Activated CD8-positive, alpha-beta T cell treated with anti-CD3 and anti-CD28 coated beads for 36 hours (primary cell): ENCODE measurements at regions of chr20 and their contacts with region 1.

Region 1: DNA sequence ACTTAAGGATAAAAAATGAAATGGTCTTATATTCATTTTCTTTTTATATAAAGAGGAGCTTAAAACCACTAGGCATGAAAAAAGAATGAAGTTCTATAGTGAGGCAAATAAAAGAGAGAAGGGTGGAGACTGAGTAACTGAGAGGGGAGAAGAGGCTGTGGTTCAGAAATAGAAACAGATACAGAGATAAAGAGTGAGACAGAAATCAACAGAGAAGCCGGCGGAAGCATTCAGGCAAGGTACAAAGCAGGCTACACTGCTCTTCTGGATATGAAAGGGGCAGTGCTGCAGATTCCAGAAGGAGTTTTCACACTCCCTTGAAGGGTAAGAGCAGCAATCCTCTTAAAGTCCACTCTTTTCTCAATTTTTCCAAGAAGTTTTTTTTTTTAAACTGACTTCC is 29.9 kb downstream of the NFATC2 start:
- DNase-seq: no peak
- ATAC-seq: peak; percentile 84
- H3K4me3 Mint-ChIP-seq: no peak overlapping the region
- H3K27ac Mint-ChIP-seq: peak overlapping the region; percentile 84
- H3K4me1 Mint-ChIP-seq: peaks cover 73% of the 10 kb centered on the region
- H3K27me3 Mint-ChIP-seq: no peaks in the 10 kb centered on the region
- CTCF ChIP-seq: no peak

Region 2: DNA sequence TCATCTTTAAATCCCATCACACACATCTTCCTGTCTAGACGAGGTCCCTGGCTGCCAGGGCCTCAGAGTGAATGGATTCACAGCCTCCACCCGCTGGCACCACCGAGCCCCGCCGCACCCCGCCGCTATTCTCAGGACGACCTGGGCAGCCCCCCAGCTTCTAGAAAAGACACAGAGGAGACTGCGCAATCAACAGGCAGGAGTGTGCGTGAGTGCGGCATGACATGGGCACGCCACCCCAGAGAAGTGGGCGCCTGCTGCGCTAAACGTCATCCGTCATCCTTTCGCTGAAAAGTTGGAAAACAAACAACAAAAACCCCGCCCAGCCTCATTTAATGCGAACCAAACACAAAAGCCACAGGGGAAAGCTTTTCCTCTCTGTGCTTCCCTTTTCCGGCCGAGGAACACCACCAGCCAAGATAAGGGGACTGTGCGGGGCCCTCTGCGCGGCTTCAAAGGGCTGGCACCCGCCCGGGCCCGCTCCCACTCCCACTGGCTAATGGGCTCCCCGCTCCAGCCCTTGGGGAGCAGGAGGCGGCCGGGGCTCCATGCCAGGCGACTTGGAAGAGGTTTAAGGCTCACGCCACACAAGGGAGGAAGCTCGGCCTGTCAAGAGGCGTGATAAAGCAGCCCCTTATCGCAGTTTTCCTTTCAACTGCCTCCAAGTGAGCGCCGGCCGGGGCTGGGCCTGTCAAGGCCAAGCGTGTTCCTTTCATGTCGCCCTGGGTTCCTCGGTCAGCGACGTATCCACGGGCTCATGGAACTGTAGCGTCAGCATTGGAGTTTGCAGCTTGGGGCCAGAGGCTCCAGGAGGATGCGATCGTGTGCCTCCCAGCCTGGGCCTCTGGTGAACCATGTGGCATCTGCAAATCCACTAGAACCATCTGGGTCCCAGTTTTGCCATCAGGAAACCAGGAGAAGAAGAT is 20.2 kb before region 1 on chr20:
- CTCF ChIA-PET with region 1: interaction called, 3 read pairs
- POLR2A ChIA-PET with region 1: interaction called, 10 read pairs
- intact Hi-C with region 1: no loop called
- DNase-seq: no peak
- ATAC-seq: no peak
- H3K4me3 Mint-ChIP-seq: no peak overlapping the region
- H3K27ac Mint-ChIP-seq: peak overlapping the region; percentile 92
- H3K4me1 Mint-ChIP-seq: peaks cover 93% of the 10 kb centered on the region
- H3K27me3 Mint-ChIP-seq: no peaks in the 10 kb centered on the region
- CTCF ChIP-seq: no peak

Region 3: GRCh38 chr20:51500311-51500710 is 12.3 kb before region 1 on chr20:
- CTCF ChIA-PET with region 1: interaction called, 8 read pairs
- POLR2A ChIA-PET with region 1: interaction called, 25 read pairs
- intact Hi-C with region 1: no loop called
- DNase-seq: peak; percentile 79
- ATAC-seq: peak; percentile 82
- H3K4me3 Mint-ChIP-seq: no peak overlapping the region
- H3K27ac Mint-ChIP-seq: peak overlapping the region; percentile 92
- H3K4me1 Mint-ChIP-seq: peaks cover 82% of the 10 kb centered on the region
- H3K27me3 Mint-ChIP-seq: no peaks in the 10 kb centered on the region
- CTCF ChIP-seq: no peak